ENCODE measurements at regions of chr21 and their contacts with region 1.

Region 1: DNA sequence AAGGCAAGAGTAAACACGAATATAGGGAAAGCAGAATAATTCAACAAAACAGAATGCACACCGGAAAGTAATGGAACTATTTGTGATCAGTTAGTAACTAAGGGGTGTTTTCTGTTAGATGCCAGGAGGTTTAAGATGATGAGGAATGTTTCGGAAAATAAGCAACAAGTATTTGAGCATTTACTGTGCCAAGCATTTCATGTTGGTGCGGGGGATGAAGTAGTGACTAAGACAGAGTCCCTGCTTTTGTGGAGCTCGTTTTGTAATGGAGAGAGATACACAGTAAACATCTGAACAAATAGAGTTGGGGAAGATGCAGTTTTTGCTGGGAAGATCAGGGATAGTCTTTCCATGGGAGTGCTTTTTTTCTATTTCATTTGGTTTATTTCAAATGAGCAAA is 78.7 kb downstream of the DYRK1A start:
- DNase-seq: no peak
- ATAC-seq: no peak
- H3K4me3 Mint-ChIP-seq: no peak overlapping the region
- H3K27ac Mint-ChIP-seq: peak overlapping the region; percentile 28
- H3K4me1 Mint-ChIP-seq: peaks cover 83% of the 10 kb centered on the region
- H3K27me3 Mint-ChIP-seq: no peaks in the 10 kb centered on the region

Region 2: DNA sequence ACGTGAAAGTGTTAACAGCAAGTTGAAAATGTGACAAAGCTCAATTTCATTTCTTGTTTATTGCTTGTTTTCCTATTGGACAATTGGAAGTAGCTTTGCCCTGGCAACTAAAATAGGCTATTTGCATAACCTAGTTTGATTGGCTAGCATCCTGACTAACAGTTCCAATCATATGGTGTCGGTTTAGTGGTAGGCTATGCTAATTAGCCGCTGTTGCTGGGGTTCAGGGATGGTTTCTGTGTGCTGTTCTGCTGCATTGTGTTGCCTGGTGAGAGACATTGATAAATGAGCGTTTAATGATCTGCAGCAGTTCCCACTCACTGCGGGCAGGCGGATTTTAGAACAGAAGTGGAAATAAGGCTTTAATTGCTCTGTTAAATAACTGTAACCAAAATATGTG is 10.1 kb before region 1 on chr21:
- CTCF ChIA-PET with region 1: no interaction called
- POLR2A ChIA-PET with region 1: no interaction called
- intact Hi-C with region 1: loop called in 1 of 2 experiments (anchors 2 kb)
- DNase-seq: peak; percentile 55
- ATAC-seq: peak; percentile 94
- H3K4me3 Mint-ChIP-seq: no peak overlapping the region
- H3K27ac Mint-ChIP-seq: no peak overlapping the region
- H3K4me1 Mint-ChIP-seq: peaks cover 41% of the 10 kb centered on the region
- H3K27me3 Mint-ChIP-seq: no peaks in the 10 kb centered on the region

Region 3: DNA sequence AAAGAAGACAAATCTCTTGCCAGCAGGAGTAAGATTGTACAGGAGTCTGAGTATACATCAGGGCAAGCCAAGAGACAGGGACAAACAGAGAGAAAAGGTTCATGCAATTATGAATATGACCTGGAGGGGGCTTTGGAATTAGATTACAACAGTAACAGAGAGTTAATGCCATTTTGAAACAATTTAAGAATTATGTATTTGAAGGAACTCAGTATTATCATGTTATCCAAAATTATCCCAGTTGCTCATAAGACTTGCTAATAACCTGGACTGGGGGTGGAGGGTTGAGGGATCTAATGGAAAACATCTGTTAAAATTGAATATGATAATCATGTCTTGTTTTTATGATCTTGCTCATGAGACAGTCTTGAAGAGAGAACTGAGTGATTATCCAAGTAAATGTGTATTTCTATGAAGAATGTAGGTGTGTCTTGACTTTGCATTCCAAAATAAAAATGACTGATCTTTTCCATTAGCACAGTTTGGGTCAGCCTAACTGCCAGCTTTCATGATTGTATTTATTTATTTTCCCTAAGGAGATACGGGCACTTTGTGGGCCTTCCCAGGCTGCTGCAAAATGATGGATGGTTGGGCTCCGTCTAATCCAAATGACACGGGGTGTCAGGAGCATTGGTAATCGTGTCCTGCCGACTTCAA is 935.4 kb after region 1 on chr21:
- CTCF ChIA-PET with region 1: no interaction called
- POLR2A ChIA-PET with region 1: no interaction called
- intact Hi-C with region 1: no loop called
- DNase-seq: no peak
- ATAC-seq: no peak
- H3K4me3 Mint-ChIP-seq: no peak overlapping the region
- H3K27ac Mint-ChIP-seq: no peak overlapping the region
- H3K4me1 Mint-ChIP-seq: peaks cover 4% of the 10 kb centered on the region
- H3K27me3 Mint-ChIP-seq: peaks cover 15% of the 10 kb centered on the region

Measured in activated CD4-positive, alpha-beta T cell treated with anti-CD3 and anti-CD28 coated beads for 36 hours (primary cell).